ENCODE measurements at regions of chr19 and their contacts with region 1.

Region 1: GRCh38 chr19:6530386-6531161 is at the start of gene TNFSF9:
- DNase-seq: peak; percentile 61 to 82 (median 71)
- H3K4me3 ChIP-seq: peak within 1 kb of the TSS; percentile 38 to 57
- H3K4me3 Mint-ChIP-seq: peak within 1 kb of the TSS; percentile 82 to 98 (median 86)
- H3K27ac ChIP-seq: peak within 1 kb of the TSS; percentile 10
- H3K27ac Mint-ChIP-seq: peak within 1 kb of the TSS; percentile 48 to 92 (median 81)
- H3K4me1 ChIP-seq: peaks cover 28% of the 10 kb centered on the region
- H3K4me1 Mint-ChIP-seq: peaks cover 21 to 46% (median 34%) of the 10 kb centered on the region in 4 donors
- H3K27me3 ChIP-seq: peaks cover 13% of the 10 kb centered on the region
- H3K27me3 Mint-ChIP-seq: peaks cover 18 to 20% of the 10 kb centered on the region in 2 donors
- total RNA-seq, gene TNFSF9: 0.64 to 0.99 TPM

Region 2: GRCh38 chr19:6501740-6502648 is 28.6 kb before region 1 on chr19 and contains the start of gene TUBB4A:
- CTCF ChIA-PET with region 1: no interaction called
- POLR2A ChIA-PET with region 1: no interaction called
- intact Hi-C with region 1: no loop called
- DNase-seq: peak in 3 of 5 donors; percentile 15 to 21 (median 17)
- H3K4me3 ChIP-seq: peak within 1 kb of the TSS in 1 of 2 donors; percentile 41
- H3K4me3 Mint-ChIP-seq: peak within 1 kb of the TSS; percentile 79 to 88 (median 84)
- H3K27ac ChIP-seq: no peak within 1 kb of the TSS
- H3K27ac Mint-ChIP-seq: peak within 1 kb of the TSS in 2 of 7 donors; percentile 42 to 81
- H3K4me1 ChIP-seq: peaks cover 18% of the 10 kb centered on the region
- H3K4me1 Mint-ChIP-seq: peaks cover 12 to 22% (median 16%) of the 10 kb centered on the region in 4 donors
- H3K27me3 ChIP-seq: peaks cover 7% of the 10 kb centered on the region
- H3K27me3 Mint-ChIP-seq: peaks cover 2 to 15% of the 10 kb centered on the region in 2 donors
- total RNA-seq, gene TUBB4A: 3.9 to 4.7 TPM

Region 3: GRCh38 chr19:6608940-6609339 is 78.4 kb after region 1 on chr19:
- CTCF ChIA-PET with region 1: no interaction called
- POLR2A ChIA-PET with region 1: no interaction called
- intact Hi-C with region 1: loop called (anchors 10 kb)
- DNase-seq: no peak
- H3K4me3 ChIP-seq: no peak overlapping the region
- H3K4me3 Mint-ChIP-seq: no peak overlapping the region
- H3K27ac ChIP-seq: no peak overlapping the region
- H3K27ac Mint-ChIP-seq: no peak overlapping the region
- H3K4me1 ChIP-seq: peaks cover 5% of the 10 kb centered on the region
- H3K4me1 Mint-ChIP-seq: peaks cover 3 to 6% (median 6%) of the 10 kb centered on the region in 4 donors
- H3K27me3 ChIP-seq: no peaks in the 10 kb centered on the region
- H3K27me3 Mint-ChIP-seq: peaks cover 11 to 30% of the 10 kb centered on the region in 2 donors

Measured in CD4-positive, alpha-beta memory T cell (primary cell).